Right ventricle myocardium inferior (tissue), 1 donor: ENCODE measurements at regions of chr10 and their contacts with region 1.

Region 1: DNA sequence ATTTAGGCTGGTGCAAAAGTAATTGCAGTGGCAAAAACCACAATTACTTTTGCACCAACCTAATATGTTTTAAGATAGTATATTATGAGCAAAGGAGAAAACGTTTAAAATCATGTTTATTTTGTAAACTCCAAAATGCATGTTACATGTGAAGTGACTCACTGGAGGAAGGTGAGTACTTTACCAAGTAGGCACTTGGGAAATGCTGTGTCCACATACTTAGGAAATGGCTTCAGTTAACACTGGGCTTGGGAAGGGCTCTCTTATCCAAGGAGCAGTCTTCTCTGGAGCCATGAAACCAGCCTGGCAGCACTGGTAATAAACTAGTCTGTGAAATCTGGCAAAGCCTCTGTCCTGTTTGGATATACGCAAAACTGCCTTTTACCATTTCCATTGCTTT is 4.4 kb downstream of the RPS24 start:
- DNase-seq: no peak
- ATAC-seq: no peak

Region 2: DNA sequence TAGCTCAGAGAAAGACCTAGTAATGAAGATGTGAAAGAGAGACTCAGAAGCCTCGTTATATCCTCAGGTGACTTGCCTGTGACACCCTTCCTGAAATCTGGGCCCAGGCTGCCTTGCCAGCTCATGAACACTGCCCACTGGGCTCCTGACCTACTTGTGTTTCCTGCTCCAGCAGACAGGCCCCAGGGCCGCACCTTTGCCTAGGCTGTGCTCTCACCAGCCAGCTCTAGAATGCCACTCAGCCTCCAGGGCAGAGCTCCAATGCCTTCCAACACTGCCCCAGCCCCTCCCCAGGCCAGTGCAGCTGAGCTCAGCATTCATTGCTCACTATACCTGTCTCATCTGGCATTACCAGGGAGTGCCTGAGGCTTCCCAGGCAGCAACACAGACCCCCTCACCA is 205.9 kb before region 1 on chr10:
- intact Hi-C with region 1: no loop called
- DNase-seq: no peak
- ATAC-seq: peak; percentile 24

Region 3: DNA sequence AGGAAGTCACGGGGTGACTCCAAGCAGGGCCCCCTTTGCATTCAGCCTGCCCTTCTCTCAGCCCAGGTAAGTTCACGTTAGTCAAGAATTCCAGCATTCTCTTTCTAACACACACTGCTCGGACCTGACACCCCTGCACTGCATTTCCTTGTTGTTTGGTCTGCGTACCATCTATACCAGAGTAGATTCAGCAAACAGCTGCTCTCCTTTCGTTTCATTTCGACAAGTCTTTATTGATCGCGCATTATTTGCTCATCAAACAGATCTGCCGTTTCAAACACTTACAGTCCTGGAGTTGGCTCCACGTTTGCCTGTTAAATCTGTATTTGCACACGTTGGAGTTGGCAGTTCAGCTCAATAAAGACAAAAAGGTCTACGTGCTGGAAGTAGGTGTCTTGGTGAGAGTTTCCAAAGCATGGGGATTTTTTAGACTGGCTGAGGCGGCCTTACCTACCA is 490.7 kb after region 1 on chr10:
- intact Hi-C with region 1: no loop called
- DNase-seq: no peak
- ATAC-seq: no peak

Region 4: GRCh38 chr10:79206300-79207095 is 1168.4 kb after region 1 on chr10:
- intact Hi-C with region 1: loop called (anchors 5 kb)
- DNase-seq: no peak
- ATAC-seq: no peak